HEK293T (cell line): ENCODE measurements at regions of chrX and their contacts with region 1.

Region 1: DNA sequence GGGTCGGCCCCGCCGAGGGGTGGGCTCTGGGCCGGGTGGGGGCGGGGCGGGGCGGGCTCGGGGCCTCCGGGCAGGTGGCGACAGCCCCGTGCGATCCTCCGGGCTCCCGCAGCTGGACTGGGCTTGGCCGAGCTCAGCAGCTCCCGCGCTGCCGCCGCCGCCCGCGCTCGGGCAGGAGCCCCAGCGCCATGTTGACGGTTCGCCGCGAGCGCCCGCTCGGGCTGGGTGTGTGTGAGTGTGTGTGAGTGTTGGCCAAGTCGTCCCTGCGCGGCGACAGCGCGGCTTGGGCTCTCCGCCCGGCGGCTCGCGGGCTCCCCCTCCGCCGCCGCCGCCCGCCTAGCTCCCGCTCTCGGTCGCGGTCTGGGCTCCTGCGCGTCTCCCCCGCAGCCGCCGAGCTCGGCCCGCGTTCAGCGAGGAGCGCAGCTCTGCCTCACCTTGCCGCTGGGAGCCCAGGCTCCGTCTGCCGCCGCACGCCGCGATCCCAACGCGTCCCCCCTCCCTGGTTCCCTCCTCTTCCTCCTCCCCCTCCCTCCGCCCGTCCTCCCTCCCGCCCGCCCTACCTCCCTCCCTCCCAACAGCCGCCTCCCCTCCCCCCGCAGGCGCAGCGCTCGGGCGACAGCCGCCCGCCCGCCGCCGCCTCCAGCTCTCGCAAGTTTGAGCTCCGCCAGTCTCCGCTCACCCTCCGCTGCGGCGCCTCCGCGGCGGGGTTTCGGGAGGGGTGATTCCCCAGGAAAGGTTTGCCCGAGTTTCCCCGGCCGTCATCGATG is at the start of gene BCOR:
- DNase-seq: peak; percentile 66

Region 2: DNA sequence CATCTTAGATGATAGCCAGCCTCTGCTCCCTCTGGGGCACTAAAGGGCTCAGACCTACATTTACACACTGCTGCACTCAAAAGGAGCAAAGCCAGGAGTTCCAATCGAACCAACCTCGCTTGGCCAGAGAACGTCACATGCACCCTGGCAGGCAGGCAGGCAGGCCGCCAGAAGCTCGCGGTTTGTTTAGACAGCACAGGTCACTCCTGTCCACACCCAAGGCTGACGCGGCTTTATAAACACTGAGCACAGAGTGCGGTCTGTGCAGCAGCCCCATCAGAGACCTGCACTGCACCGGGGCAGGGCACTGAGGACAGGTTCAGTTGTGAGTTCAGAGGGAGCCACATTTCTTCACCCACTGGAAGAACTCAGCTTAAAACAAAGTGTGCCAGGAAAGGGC is 143.8 kb before region 1 on chrX:
- CTCF ChIA-PET with region 1: no interaction called
- POLR2A ChIA-PET with region 1: no interaction called
- DNase-seq: peak; percentile 41

Region 3: DNA sequence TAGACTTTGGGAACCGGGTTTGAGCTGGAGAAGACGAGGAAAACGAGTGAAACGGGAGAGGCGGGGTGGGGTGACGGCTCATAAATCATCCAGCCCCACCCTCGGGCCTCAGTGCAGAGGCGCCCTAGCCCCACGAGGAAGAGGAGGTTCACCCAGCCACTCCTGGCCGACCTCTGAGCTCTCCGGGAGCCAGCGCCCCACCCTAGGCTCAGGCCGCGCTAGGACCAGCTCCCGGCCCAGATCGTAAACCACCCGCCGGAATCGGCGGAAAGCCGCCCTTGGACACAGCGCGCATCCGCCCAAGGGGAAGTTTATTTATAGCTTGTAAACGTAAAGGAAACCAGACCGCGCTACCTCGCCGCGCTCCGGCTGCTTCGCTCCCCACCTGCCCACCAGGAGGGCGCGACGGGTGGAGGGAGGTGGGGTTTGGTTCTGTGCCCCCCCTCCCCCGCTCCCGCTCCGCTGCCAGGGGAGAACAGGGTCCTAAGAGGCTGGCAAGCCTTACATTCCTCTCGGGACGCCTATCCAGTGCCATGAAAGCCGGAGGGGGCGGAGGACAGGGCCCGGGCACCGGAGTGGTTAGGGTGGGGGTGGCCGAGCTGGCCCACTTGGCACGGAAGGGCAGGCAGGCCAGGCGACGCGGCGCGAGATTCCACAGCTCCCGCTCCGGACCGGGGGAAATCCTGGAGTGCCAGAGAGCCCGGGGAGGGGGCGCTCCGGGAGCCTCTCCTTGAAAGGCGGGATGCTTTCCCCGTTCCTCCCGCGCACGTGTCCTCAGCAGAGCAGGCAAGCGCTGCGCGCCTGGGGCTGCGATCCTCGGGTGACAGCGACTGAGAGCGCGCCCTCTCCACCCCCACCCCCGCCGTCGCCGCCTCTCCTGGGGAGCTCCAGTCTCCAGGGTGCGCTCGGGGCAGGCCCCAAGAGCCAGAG is 84.1 kb before region 1 on chrX:
- CTCF ChIA-PET with region 1: no interaction called
- POLR2A ChIA-PET with region 1: interaction called, 12 read pairs
- DNase-seq: peak; percentile 55

Region 4: GRCh38 chrX:40068044-40068443 is 29.6 kb before region 1 on chrX:
- CTCF ChIA-PET with region 1: no interaction called
- POLR2A ChIA-PET with region 1: no interaction called
- DNase-seq: no peak

Region 5: GRCh38 chrX:40108959-40109287 is 11.2 kb after region 1 on chrX:
- CTCF ChIA-PET with region 1: no interaction called
- POLR2A ChIA-PET with region 1: interaction called, 15 read pairs
- DNase-seq: peak; percentile 64

Region 6: GRCh38 chrX:40120838-40121682 is 23.4 kb after region 1 on chrX:
- CTCF ChIA-PET with region 1: no interaction called
- POLR2A ChIA-PET with region 1: no interaction called
- DNase-seq: no peak

Region 7: DNA sequence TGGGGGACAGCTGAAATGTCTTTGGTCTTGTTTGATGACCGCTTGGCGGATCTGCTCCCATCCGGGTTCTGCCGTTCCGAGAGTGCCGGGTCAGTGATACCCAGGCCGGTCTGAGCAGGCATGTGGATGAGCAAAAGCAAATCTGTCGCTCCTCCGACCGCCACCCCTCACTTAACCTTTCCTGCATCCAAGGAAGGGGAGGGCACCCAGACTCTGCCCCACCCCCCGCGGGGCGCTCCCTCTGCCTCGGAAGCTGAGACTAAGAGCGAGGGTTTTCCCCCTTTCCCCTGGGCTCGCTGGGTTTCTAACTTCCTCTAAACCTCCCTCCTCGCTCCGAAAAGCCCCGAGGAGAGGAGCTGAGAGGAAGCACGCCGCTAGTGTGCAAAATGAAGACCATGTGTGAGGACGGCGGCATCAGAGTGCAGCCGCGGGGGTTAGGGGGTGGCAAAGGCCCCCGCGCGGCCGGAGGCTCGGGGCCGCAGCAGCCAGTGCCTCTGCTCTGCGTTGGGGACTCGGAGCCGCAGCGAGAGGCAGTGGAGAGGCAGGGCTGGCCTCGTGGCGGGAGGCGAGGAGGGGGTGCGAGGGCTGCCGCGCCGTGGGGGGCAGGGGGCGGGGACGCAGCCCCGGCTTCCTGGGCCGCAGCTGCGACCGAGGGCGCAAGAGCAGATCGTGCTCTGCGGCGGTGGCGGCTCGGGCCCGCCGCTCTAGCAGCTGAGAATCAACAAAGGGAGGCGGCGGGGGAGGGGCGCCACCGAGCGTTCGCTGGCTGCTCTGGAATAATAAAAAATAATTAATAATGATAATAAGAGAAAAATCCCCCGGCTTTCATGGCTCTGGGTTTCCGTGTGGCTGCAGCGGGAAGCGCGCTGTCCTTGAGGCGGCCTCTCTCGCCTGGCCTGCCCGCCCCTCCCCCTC is 55.9 kb after region 1 on chrX:
- CTCF ChIA-PET with region 1: interaction called, 3 read pairs
- POLR2A ChIA-PET with region 1: interaction called, 34 read pairs
- DNase-seq: no peak

Region 8: GRCh38 chrX:40169193-40170101 is 71.8 kb after region 1 on chrX:
- CTCF ChIA-PET with region 1: interaction called, 7 read pairs
- POLR2A ChIA-PET with region 1: interaction called, 10 read pairs
- DNase-seq: no peak